Activated CD4-positive, alpha-beta T cell treated with anti-CD3 and anti-CD28 coated beads, Interleukin-2, amount 10 ng/mL, durations not matched to agents 24 days and 14 days (primary cell): ENCODE measurements at regions of chr22 and their contacts with region 1.

Region 1: GRCh38 chr22:24768537-24769374 is 5.8 kb downstream of the PIWIL3 start:
- DNase-seq: peak; percentile 82
- H3K4me3 Mint-ChIP-seq: no peak overlapping the region
- H3K27ac Mint-ChIP-seq: no peak overlapping the region
- H3K4me1 Mint-ChIP-seq: peaks cover 3% of the 10 kb centered on the region
- H3K27me3 Mint-ChIP-seq: peaks cover 6% of the 10 kb centered on the region

Region 2: GRCh38 chr22:24834845-24835570 is 66.3 kb after region 1 on chr22:
- intact Hi-C with region 1: loop called (anchors 5 kb)
- DNase-seq: no peak
- H3K4me3 Mint-ChIP-seq: no peak overlapping the region
- H3K27ac Mint-ChIP-seq: no peak overlapping the region
- H3K4me1 Mint-ChIP-seq: no peaks in the 10 kb centered on the region
- H3K27me3 Mint-ChIP-seq: peaks cover 2% of the 10 kb centered on the region

Region 3: GRCh38 chr22:24845041-24845898 is 76.5 kb after region 1 on chr22:
- intact Hi-C with region 1: loop called (anchors 1 kb)
- DNase-seq: no peak
- H3K4me3 Mint-ChIP-seq: no peak overlapping the region
- H3K27ac Mint-ChIP-seq: no peak overlapping the region
- H3K4me1 Mint-ChIP-seq: peaks cover 5% of the 10 kb centered on the region
- H3K27me3 Mint-ChIP-seq: peaks cover 3% of the 10 kb centered on the region

Region 4: GRCh38 chr22:25048659-25049647 is 280.2 kb after region 1 on chr22:
- intact Hi-C with region 1: loop called (anchors 2 kb)
- DNase-seq: peak; percentile 93
- H3K4me3 Mint-ChIP-seq: no peak overlapping the region
- H3K27ac Mint-ChIP-seq: no peak overlapping the region
- H3K4me1 Mint-ChIP-seq: peaks cover 2% of the 10 kb centered on the region
- H3K27me3 Mint-ChIP-seq: peaks cover 4% of the 10 kb centered on the region